ENCODE measurements at regions of chr16 and their contacts with region 1.

Region 1: DNA sequence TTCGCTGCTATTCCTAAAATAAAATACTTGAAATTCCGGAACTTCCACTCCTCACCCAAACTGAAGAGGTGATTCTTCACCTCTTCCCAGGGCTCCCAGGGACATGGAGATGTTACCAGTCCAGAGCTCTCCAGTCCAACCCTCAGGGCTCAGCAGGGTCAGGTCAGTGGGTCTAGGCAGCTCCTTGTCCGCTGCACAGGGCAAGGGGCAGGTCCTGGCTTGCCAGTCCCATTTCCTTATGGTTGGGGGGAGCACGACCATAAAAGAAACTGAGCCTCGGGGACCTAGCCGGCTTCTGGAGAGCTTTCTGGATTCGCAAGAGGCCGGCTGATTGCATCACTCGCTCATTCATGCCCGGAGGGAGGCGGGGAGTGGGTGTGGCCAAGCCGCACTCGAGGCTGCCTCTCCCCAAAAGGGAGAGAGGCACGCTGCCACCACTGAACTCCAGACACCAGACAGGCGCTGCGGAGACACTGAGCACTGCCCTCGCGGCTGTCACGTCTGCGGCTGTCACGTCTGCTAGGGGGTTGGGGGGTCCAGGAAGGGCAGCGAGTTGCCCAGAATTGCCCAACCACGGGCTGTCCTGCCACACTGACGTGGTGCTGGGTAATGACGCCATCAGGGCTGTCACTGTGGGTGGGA is 15.8 kb downstream of the SLC7A5 start:
- DNase-seq: peak; percentile 65
- H3K4me3 ChIP-seq: peak overlapping the region; percentile 38
- CTCF ChIP-seq: no peak

Region 2: GRCh38 chr16:87790278-87791032 is 63.1 kb before region 1 on chr16:
- CTCF ChIA-PET with region 1: interaction called, 10 read pairs
- POLR2A ChIA-PET with region 1: no interaction called
- DNase-seq: no peak
- H3K4me3 ChIP-seq: no peak overlapping the region
- CTCF ChIP-seq: no peak

Region 3: DNA sequence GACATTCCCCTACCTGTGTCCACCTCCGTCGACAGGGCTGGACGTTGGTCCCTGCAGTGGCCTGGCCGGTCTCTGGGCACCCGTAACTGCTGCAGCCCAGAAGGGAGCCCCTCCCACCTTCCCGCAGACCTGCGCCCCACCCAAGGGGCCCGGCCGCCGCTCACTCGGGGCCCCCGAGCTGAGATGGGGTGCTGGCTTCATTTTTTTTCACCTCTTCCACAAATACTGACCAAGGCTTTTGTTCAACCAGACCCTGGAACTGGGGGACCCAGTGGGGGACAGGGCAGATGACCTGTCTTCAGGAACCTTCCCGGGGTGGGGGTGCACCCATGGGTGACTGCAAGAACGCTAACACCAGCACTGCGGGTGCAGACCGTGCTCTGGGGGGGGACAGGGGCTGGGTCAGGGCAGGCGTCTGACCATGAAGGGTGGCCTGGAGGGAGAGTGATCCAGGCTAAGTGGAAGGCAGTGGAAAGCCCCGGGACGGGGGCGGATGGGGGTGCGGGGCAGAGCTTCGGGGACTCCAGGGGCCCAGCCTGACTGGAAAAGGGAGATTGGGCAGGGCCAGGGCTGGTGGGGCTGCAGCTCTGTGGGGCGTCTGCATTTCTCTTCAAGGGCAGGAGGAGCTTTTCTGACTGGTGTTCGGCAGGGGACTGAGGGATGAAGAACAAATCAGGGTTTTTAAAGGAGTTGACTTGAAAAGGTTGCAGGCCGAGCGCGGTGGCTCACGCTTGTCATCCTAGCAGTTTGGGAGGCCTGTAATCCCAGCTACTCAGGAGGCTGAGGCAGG is 26.5 kb before region 1 on chr16:
- CTCF ChIA-PET with region 1: interaction called, 157 read pairs
- POLR2A ChIA-PET with region 1: no interaction called
- DNase-seq: no peak
- H3K4me3 ChIP-seq: no peak overlapping the region
- CTCF ChIP-seq: no peak

Region 4: DNA sequence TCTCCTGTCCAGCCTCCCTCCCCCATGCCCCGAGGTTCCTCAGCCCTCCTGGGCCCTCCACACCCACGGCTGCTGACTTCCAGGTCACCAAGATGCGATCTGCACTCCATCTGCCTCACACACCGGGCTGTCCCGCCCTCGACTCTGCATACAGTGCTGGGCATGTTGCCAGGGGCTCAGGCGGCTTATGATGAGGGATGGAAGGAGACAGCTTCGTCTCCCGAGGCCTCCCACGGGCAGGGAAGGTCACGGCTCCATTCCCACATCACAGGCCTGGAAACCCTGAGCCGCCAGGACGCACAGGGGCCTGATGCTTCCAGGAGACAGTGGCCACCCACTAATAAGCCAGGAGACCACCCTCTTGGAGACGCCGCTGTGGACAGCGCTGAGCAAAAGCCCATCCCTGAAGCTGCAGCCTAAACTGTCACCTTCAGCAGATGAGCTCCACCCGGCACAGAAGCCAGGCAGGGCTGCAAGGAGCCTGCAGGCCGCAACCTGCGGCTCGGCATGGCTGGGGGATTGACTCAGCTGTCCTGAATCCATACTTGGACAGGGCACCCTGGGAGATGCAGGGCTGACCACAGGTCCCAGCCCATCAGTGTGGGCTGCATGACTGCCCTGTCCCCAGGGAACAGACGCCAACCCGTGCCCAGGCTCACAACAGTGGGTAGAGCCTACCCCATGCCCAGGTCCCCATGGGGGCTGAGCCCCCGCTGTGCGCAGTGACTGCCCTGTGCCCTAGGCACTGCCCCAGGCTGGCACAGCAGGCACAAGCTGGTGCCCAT is 18.7 kb before region 1 on chr16:
- CTCF ChIA-PET with region 1: interaction called, 157 read pairs
- POLR2A ChIA-PET with region 1: no interaction called
- DNase-seq: no peak
- H3K4me3 ChIP-seq: no peak overlapping the region
- CTCF ChIP-seq: no peak